ENCODE measurements at regions of chr15 and their contacts with region 1.

Region 1: DNA sequence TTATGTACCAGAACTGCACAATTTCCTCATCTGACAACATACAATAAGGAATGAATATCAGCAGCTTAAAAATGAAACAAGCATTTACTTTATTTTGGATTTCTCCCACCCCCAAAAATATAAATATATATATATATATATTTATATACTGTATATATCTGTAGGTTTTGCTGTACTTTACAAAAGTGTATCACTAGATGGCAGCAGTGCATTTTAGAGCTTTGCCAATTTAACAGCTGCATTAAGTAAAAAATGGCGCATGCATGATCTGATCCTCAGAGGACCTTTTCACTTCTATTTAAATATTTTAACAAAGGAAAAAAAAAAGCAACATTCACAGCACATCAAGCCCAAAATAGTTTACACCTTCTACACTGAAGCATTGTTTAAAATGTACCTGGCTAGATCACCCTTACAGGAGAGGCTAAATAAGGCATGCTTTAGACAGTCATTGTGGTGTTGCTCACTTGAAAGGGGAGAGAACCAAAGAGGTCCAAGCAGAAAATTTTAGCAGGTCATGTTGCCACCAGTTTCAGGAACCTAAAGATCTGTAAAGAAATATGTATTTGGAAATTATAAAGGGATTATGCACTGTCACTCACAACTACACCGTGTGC is 72.6 kb downstream of the NPTN start:
- DNase-seq: no peak
- ATAC-seq: peak; percentile 30 to 69 (median 55)
- H3K4me3 ChIP-seq: no peak overlapping the region
- H3K27ac ChIP-seq: no peak overlapping the region
- H3K4me1 ChIP-seq: no peaks in the 10 kb centered on the region
- H3K27me3 ChIP-seq: no peaks in the 10 kb centered on the region
- CTCF ChIP-seq: peak in 3 of 4 donors; percentile 53 to 56 (median 54)
- POLR2A ChIP-seq: no peak

Region 2: DNA sequence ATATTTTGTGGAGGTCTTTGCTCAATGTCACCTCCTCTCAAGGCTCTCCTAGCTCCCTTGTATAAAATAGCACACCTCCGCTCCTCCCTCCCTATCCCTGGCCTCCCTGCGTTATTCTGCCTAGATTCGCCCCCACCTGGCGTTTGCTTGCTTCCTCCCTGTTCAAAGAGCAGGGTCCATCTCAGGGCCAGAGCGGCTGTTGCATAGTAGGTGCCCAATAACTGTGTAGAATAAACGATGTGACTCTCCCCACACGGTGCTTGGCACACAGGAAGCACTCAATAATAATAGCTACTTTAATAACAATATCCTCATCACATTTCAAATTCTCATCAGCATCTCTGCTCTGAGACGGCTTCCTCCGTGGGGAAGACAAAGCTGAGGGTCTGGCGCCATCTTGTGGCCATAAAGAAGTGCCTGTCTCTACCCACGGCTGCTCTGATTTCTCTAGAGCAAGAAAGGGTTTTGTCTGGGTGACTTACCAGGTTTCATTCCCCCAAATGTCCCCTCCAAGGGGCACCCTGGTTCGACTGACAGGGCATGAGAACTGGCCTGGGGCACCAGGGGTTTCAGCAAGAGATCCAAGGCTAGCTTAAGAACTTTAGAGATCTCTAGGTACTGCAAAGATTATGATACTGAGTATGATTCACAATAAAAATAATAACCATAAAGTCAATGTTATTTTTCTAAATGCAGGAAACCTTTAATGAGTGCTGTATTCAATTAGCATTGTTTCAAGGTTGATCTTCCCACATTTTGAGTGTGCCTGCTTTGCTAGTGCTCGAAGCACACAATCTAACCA is 139.6 kb after region 1 on chr15:
- intact Hi-C with region 1: loop called in 1 of 2 experiments (anchors 5 kb)
- DNase-seq: peak in 2 of 3 donors; percentile 66 to 76
- ATAC-seq: peak; percentile 58 to 81 (median 69)
- H3K4me3 ChIP-seq: no peak overlapping the region
- H3K27ac ChIP-seq: no peak overlapping the region
- H3K4me1 ChIP-seq: peaks cover 0 to 7% (median 0%) of the 10 kb centered on the region in 4 donors
- H3K27me3 ChIP-seq: no peaks in the 10 kb centered on the region
- CTCF ChIP-seq: peak; percentile 90 to 96 (median 94)
- POLR2A ChIP-seq: no peak